ENCODE measurements at regions of chr11 and their contacts with region 1.

Region 1: DNA sequence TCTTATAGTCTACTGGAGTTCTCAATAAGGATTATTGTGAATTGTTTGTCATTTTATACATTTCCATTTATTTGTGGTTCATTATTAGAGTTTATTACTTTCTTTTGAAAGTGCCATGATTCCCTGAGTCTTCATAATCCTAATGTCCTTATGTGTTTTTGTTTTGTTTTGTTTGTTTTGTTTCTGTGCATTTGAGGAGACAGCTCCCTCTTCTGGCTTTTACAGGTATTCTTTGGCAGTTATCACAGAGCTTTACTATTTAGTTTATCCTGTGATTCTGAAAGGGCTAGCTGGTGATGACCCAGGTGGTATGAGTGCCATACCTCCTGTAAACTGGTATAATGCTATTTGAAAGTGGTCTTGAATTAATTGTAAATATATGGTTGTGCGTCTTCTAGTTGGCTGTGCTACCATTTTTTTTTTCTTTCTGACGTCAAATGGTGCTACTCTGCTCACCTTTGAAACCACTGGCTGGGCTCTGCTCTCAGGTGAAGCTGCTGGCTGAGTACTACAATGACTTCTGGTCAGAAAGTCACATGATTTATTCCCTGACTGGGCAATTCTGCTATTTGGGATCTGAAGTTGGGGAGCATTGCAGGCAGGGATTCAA is 751.2 kb downstream of the JRKL start:
- DNase-seq: no peak
- H3K4me3 ChIP-seq: no peak overlapping the region
- H3K27ac ChIP-seq: no peak overlapping the region
- H3K4me1 ChIP-seq: no peaks in the 10 kb centered on the region
- H3K27me3 ChIP-seq: no peaks in the 10 kb centered on the region
- CTCF ChIP-seq: peak; percentile 29 to 43 (median 42)
- EP300 ChIP-seq: no peak
- POLR2A ChIP-seq: no peak

Region 2: DNA sequence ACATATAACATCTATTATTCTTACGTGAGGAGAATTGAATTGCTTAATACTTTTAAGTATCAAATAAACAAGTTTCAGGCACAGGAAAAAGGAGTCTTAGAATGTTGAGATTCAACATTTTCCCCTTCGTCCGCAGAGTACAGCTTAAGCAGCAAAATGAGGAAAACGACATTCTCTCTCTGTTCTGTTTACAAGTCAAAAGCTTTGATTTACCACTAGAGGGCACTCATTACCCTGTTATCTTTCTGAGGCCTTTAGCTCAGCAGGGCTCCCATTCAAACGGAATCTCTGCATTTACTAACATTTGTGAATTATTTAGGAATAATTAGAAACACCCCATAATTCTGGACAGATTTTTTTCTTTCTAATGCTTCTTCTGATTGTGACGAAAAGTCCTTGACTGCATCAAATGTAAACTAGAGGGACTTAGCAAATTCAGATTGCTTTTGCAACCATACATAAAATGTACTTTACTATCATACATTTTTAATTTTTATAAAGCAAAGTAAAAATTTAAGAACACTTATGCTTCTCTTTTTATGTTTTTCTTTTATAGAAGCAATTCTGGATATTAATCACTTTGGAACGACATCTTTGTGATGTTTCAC is 676.2 kb before region 1 on chr11:
- in situ Hi-C with region 1: loop called in 3 of 4 experiments (anchors 10 to 25 kb)
- intact Hi-C with region 1: no loop called
- DNase-seq: no peak
- H3K4me3 ChIP-seq: no peak overlapping the region
- H3K27ac ChIP-seq: no peak overlapping the region
- H3K4me1 ChIP-seq: peaks cover 0 to 11% (median 0%) of the 10 kb centered on the region in 4 donors
- H3K27me3 ChIP-seq: peaks cover 5% of the 10 kb centered on the region
- CTCF ChIP-seq: peak; percentile 48 to 76 (median 69)
- EP300 ChIP-seq: no peak
- POLR2A ChIP-seq: no peak

Region 3: GRCh38 chr11:97502201-97502600 is 361.2 kb after region 1 on chr11:
- in situ Hi-C with region 1: no loop called
- intact Hi-C with region 1: no loop called
- DNase-seq: no peak
- H3K4me3 ChIP-seq: no peak overlapping the region
- H3K27ac ChIP-seq: no peak overlapping the region
- H3K4me1 ChIP-seq: no peaks in the 10 kb centered on the region
- H3K27me3 ChIP-seq: no peaks in the 10 kb centered on the region
- CTCF ChIP-seq: no peak
- EP300 ChIP-seq: no peak
- POLR2A ChIP-seq: no peak